CD4-positive, alpha-beta T cell (primary cell): ENCODE measurements at regions of chr5 and their contacts with region 1.

Region 1: GRCh38 chr5:77030097-77031071 is at the start of gene AGGF1:
- DNase-seq: peak; percentile 81 to 95 (median 89)
- ATAC-seq: peak; percentile 97
- H3K4me3 ChIP-seq: peak within 1 kb of the TSS; percentile 90
- H3K4me3 Mint-ChIP-seq: peak within 1 kb of the TSS; percentile 85
- H3K27ac ChIP-seq: peak within 1 kb of the TSS; percentile 70 to 82
- H3K27ac Mint-ChIP-seq: peak within 1 kb of the TSS; percentile 89
- H3K4me1 ChIP-seq: peaks cover 19% of the 10 kb centered on the region
- H3K4me1 Mint-ChIP-seq: peaks cover 52% of the 10 kb centered on the region
- H3K27me3 ChIP-seq: no peaks in the 10 kb centered on the region
- H3K27me3 Mint-ChIP-seq: peaks cover 3% of the 10 kb centered on the region
- CTCF ChIP-seq: no peak
- total RNA-seq, gene AGGF1: 15.5 to 15.7 TPM

Region 2: DNA sequence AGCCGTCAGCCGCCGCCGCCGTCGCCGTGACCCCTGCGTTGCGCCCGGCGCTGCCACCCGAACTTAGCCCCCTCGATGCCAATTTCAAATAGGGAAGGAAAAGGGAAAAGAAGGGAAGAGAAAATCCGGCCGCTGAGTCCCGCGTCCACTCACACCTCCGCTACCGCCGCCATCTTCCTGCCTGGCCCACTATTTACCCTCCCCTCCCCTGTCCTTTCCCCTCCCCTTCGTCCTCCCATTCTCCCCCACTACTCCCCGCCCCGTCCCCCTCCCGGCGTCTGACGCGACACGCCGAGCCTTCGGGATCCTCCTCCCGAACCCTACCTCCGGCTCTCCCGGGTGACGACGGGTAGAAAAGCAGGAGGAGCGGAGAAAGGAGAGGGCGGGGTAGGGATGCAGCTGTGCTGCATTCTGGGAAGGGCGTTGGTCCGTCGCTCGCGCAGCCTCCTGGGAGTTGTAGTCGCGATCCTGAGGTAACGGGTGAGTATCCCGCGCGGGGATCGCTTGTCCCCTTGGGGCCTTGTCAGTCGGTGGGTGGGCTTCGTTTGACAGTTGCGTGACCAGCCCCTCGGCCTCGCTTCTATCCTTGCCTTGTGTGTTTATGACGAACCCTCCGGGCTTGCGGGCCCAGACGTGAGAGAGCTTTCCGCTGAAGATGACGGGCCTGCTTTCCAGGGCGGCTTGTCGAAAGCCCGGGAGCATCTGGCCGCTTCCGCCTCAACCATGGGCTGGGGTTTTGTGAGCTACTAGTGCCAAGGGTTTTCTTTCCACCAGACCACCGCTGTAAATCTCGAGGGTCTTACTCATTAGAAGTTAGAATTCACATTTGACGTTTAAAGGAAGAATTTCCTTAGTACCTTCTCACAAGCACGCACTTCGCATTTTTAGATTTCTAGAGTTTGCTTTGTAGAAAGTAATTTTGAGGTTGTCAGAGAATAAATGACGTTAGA is 1518.7 kb before region 1 on chr5 and contains the starts of genes CERT1 and POLK:
- CTCF ChIA-PET with region 1: no interaction called
- POLR2A ChIA-PET with region 1: no interaction called
- intact Hi-C with region 1: loop called in 1 of 2 experiments (anchors 5 kb)
- DNase-seq: peak; percentile 83 to 98 (median 90)
- ATAC-seq: peak; percentile 88
- H3K4me3 ChIP-seq: peak within 1 kb of the TSS; percentile 92
- H3K4me3 Mint-ChIP-seq: peak within 1 kb of the TSS; percentile 96
- H3K27ac ChIP-seq: peak within 1 kb of the TSS; percentile 78
- H3K27ac Mint-ChIP-seq: peak within 1 kb of the TSS; percentile 99
- H3K4me1 ChIP-seq: peaks cover 17% of the 10 kb centered on the region
- H3K4me1 Mint-ChIP-seq: peaks cover 65% of the 10 kb centered on the region
- H3K27me3 ChIP-seq: no peaks in the 10 kb centered on the region
- H3K27me3 Mint-ChIP-seq: no peaks in the 10 kb centered on the region
- CTCF ChIP-seq: no peak
- total RNA-seq, gene CERT1: 26.5 to 28.7 TPM
- total RNA-seq, gene POLK: 10.0 to 10.3 TPM

Region 3: DNA sequence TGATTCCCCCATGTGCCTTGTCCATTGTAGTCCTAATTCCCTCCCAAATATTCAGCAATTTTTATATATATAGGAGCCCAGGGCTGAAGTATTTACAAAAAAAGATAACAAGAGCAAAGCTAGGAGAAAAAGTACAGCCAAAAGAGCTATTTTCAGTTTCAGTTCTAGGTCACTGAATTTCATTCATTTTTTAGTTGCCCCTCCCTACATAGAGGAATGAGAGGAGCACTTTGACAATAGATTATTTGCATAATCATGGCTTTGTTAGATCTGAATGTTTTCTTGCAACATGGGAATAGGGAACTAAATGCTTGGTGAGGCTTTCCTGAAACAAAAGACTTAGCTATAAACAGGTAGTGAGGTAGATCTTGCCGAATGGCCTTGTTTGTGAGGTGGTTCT is 391.9 kb before region 1 on chr5:
- CTCF ChIA-PET with region 1: no interaction called
- POLR2A ChIA-PET with region 1: no interaction called
- intact Hi-C with region 1: no loop called
- DNase-seq: no peak
- ATAC-seq: no peak
- H3K4me3 ChIP-seq: no peak overlapping the region
- H3K4me3 Mint-ChIP-seq: no peak overlapping the region
- H3K27ac ChIP-seq: no peak overlapping the region
- H3K27ac Mint-ChIP-seq: peak overlapping the region; percentile 29
- H3K4me1 ChIP-seq: no peaks in the 10 kb centered on the region
- H3K4me1 Mint-ChIP-seq: no peaks in the 10 kb centered on the region
- H3K27me3 ChIP-seq: no peaks in the 10 kb centered on the region
- H3K27me3 Mint-ChIP-seq: no peaks in the 10 kb centered on the region
- CTCF ChIP-seq: no peak

Region 4: GRCh38 chr5:76867827-76868693 is 162.3 kb before region 1 on chr5:
- CTCF ChIA-PET with region 1: no interaction called
- POLR2A ChIA-PET with region 1: interaction called, 4 read pairs
- intact Hi-C with region 1: loop called (anchors 5 kb)
- DNase-seq: peak; percentile 24 to 75 (median 51)
- ATAC-seq: peak; percentile 87
- H3K4me3 ChIP-seq: no peak overlapping the region
- H3K4me3 Mint-ChIP-seq: no peak overlapping the region
- H3K27ac ChIP-seq: no peak overlapping the region
- H3K27ac Mint-ChIP-seq: no peak overlapping the region
- H3K4me1 ChIP-seq: no peaks in the 10 kb centered on the region
- H3K4me1 Mint-ChIP-seq: no peaks in the 10 kb centered on the region
- H3K27me3 ChIP-seq: no peaks in the 10 kb centered on the region
- H3K27me3 Mint-ChIP-seq: no peaks in the 10 kb centered on the region
- CTCF ChIP-seq: peak; percentile 67

Region 5: DNA sequence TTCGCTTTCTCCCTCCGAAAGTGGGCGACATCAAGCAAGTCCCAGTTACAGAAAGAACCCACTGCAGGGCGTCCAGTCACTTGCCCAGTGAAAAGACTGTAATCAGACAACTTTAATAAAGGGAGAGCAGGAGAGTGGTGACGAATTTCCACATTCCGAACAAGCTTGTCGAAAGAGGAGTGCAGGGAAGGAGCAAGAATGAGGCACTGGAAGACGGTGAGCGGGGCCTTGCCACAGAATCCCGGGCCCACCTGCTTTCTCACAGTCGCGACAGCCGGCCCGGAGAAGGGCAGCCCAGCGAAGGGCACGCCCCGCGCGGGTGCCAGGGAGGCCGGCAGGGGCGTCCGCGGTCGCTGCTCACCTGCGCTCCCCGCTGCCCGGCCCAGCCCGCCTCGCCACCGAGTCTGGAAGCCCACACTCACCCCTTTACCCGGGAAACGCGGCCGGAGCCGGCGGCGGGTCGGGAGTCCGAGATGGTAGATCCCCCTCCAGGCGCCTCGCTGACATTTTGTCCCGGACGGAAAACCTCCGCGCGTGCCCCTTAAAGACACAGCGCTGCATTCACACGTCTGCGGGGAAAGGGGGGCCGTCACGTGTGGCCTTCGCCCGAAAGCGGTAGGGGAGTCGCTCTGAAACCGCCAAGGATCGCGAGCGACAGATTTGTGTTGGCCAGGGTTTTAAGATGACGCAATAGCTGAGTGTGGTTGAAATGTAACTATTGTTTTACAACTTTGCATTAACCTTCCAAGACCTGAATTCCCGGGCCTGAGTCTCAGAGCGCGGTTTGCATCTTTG is 56.5 kb after region 1 on chr5 and contains the start of gene ZBED3:
- CTCF ChIA-PET with region 1: no interaction called
- POLR2A ChIA-PET with region 1: interaction called, 19 read pairs
- intact Hi-C with region 1: no loop called
- DNase-seq: peak in 13 of 14 experiments; percentile 27 to 78 (median 50)
- ATAC-seq: peak; percentile 88
- H3K4me3 ChIP-seq: peak within 1 kb of the TSS; percentile 80
- H3K4me3 Mint-ChIP-seq: peak within 1 kb of the TSS; percentile 96
- H3K27ac ChIP-seq: no peak within 1 kb of the TSS
- H3K27ac Mint-ChIP-seq: peak within 1 kb of the TSS; percentile 73
- H3K4me1 ChIP-seq: peaks cover 15% of the 10 kb centered on the region
- H3K4me1 Mint-ChIP-seq: peaks cover 13% of the 10 kb centered on the region
- H3K27me3 ChIP-seq: peaks cover 0 to 6% of the 10 kb centered on the region in 2 experiments
- H3K27me3 Mint-ChIP-seq: peaks cover 11% of the 10 kb centered on the region
- CTCF ChIP-seq: peak; percentile 26
- total RNA-seq, gene ZBED3: 3.0 to 3.7 TPM

Region 6: GRCh38 chr5:77775790-77776553 is 745.6 kb after region 1 on chr5 and contains the start of gene TBCA:
- CTCF ChIA-PET with region 1: no interaction called
- POLR2A ChIA-PET with region 1: no interaction called
- intact Hi-C with region 1: loop called in 1 of 2 experiments (anchors 10 kb)
- DNase-seq: peak; percentile 78 to 98 (median 89)
- ATAC-seq: peak; percentile 82
- H3K4me3 ChIP-seq: peak within 1 kb of the TSS; percentile 79
- H3K4me3 Mint-ChIP-seq: peak within 1 kb of the TSS; percentile 94
- H3K27ac ChIP-seq: peak within 1 kb of the TSS; percentile 89 to 92
- H3K27ac Mint-ChIP-seq: peak within 1 kb of the TSS; percentile 95
- H3K4me1 ChIP-seq: peaks cover 34% of the 10 kb centered on the region
- H3K4me1 Mint-ChIP-seq: peaks cover 53% of the 10 kb centered on the region
- H3K27me3 ChIP-seq: no peaks in the 10 kb centered on the region
- H3K27me3 Mint-ChIP-seq: no peaks in the 10 kb centered on the region
- CTCF ChIP-seq: peak; percentile 34
- total RNA-seq, gene TBCA: 72.0 to 72.9 TPM

Region 7: GRCh38 chr5:78359831-78360673 is 1329.7 kb after region 1 on chr5 and contains the start of gene SCAMP1:
- CTCF ChIA-PET with region 1: no interaction called
- POLR2A ChIA-PET with region 1: no interaction called
- intact Hi-C with region 1: loop called in 1 of 2 experiments (anchors 10 kb)
- DNase-seq: peak; percentile 80 to 96 (median 90)
- ATAC-seq: peak; percentile 79
- H3K4me3 ChIP-seq: peak within 1 kb of the TSS; percentile 96
- H3K4me3 Mint-ChIP-seq: peak within 1 kb of the TSS; percentile 91
- H3K27ac ChIP-seq: peak within 1 kb of the TSS; percentile 86 to 87
- H3K27ac Mint-ChIP-seq: peak within 1 kb of the TSS; percentile 83
- H3K4me1 ChIP-seq: peaks cover 23% of the 10 kb centered on the region
- H3K4me1 Mint-ChIP-seq: peaks cover 53% of the 10 kb centered on the region
- H3K27me3 ChIP-seq: no peaks in the 10 kb centered on the region
- H3K27me3 Mint-ChIP-seq: no peaks in the 10 kb centered on the region
- CTCF ChIP-seq: peak; percentile 27
- total RNA-seq, gene SCAMP1: 16.0 to 18.4 TPM